ENCODE measurements at regions of chr7 and their contacts with region 1.

Region 1: GRCh38 chr7:113159746-113160339 is 41.5 kb upstream of the SMIM30 start:
- DNase-seq: peak; percentile 31 to 51
- H3K4me3 ChIP-seq: no peak overlapping the region
- H3K27ac ChIP-seq: no peak overlapping the region
- H3K4me1 ChIP-seq: no peaks in the 10 kb centered on the region
- H3K27me3 ChIP-seq: no peaks in the 10 kb centered on the region
- CTCF ChIP-seq: peak; percentile 34 to 68 (median 65)
- EP300 ChIP-seq: no peak
- POLR2A ChIP-seq: no peak
- RAD21 ChIP-seq: peak; percentile 75 to 83

Region 2: DNA sequence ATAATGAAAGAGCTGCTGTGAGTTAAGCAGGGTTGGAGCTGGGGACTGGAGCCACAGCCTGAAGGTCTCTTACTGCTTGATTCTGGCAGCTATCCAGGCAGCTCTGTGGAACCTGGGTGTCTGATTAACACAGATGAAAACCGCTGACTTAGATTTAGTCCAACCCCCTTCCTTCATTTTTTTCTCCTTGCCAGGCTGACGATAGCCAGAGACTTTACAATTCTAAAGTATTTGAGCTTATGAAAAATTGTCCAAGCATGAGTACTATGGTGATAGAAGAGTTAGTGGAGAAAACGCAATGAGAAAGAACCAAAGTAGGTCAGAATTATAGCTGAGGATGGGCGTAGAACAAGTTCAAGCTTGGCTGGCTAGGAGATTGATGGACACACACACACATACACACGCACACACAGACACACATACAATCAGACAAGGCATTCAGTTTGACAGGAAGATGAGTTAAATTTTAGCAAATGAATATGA is 59.7 kb before region 1 on chr7:
- CTCF ChIA-PET with region 1: no interaction called
- POLR2A ChIA-PET with region 1: no interaction called
- DNase-seq: no peak
- H3K4me3 ChIP-seq: no peak overlapping the region
- H3K27ac ChIP-seq: no peak overlapping the region
- H3K4me1 ChIP-seq: no peaks in the 10 kb centered on the region
- H3K27me3 ChIP-seq: no peaks in the 10 kb centered on the region; a peak in 2 of 7 replicates
- CTCF ChIP-seq: no peak
- EP300 ChIP-seq: no peak
- POLR2A ChIP-seq: no peak
- RAD21 ChIP-seq: no peak

Region 3: GRCh38 chr7:113128028-113128427 is 31.8 kb before region 1 on chr7:
- CTCF ChIA-PET with region 1: interaction called, 16 read pairs
- POLR2A ChIA-PET with region 1: no interaction called
- DNase-seq: no peak
- H3K4me3 ChIP-seq: no peak overlapping the region
- H3K27ac ChIP-seq: no peak overlapping the region
- H3K4me1 ChIP-seq: no peaks in the 10 kb centered on the region
- H3K27me3 ChIP-seq: no peaks in the 10 kb centered on the region
- CTCF ChIP-seq: no peak
- EP300 ChIP-seq: no peak
- POLR2A ChIP-seq: no peak
- RAD21 ChIP-seq: no peak

Region 4: GRCh38 chr7:113142385-113143119 is 17.3 kb before region 1 on chr7:
- CTCF ChIA-PET with region 1: interaction called, 23 read pairs
- POLR2A ChIA-PET with region 1: no interaction called
- DNase-seq: no peak
- H3K4me3 ChIP-seq: no peak overlapping the region
- H3K27ac ChIP-seq: no peak overlapping the region
- H3K4me1 ChIP-seq: no peaks in the 10 kb centered on the region
- H3K27me3 ChIP-seq: no peaks in the 10 kb centered on the region
- CTCF ChIP-seq: no peak
- EP300 ChIP-seq: no peak
- POLR2A ChIP-seq: no peak
- RAD21 ChIP-seq: no peak

Region 5: DNA sequence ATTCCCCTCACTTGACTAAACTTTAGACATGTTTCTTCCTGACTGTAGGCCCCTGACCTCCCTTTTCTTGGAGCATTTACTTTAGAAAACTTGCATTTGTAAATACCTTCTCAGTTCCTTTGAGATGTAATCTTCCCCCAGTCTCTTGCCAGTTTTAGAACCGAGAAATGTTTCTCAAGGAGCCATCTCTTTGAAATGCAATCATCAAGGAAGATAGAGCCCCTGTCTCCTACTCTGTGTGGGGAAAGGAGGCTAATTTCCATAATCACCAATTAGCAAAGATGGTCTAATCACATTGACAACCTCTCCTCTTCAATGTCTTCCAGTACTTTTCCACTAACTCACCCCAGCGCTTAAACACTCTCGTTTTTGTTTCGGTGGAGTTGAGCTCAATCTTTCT is 28.6 kb after region 1 on chr7:
- CTCF ChIA-PET with region 1: interaction called, 18 read pairs
- POLR2A ChIA-PET with region 1: no interaction called
- DNase-seq: no peak
- H3K4me3 ChIP-seq: no peak overlapping the region
- H3K27ac ChIP-seq: no peak overlapping the region
- H3K4me1 ChIP-seq: no peaks in the 10 kb centered on the region
- H3K27me3 ChIP-seq: peaks cover 0 to 3% (median 0%) of the 10 kb centered on the region in 4 experiments; a peak in 1 of 7 replicates
- CTCF ChIP-seq: no peak
- EP300 ChIP-seq: no peak
- POLR2A ChIP-seq: no peak
- RAD21 ChIP-seq: no peak

Region 6: GRCh38 chr7:113289140-113289740 is 129.4 kb after region 1 on chr7:
- CTCF ChIA-PET with region 1: interaction called, 13 read pairs
- POLR2A ChIA-PET with region 1: no interaction called
- DNase-seq: no peak
- H3K4me3 ChIP-seq: no peak overlapping the region
- H3K27ac ChIP-seq: no peak overlapping the region
- H3K4me1 ChIP-seq: no peaks in the 10 kb centered on the region
- H3K27me3 ChIP-seq: no peaks in the 10 kb centered on the region
- CTCF ChIP-seq: peak in 2 of 3 experiments; percentile 43 to 62; a peak in 2 of 4 replicates
- EP300 ChIP-seq: no peak
- POLR2A ChIP-seq: no peak
- RAD21 ChIP-seq: peak; percentile 71 to 74

Region 7: DNA sequence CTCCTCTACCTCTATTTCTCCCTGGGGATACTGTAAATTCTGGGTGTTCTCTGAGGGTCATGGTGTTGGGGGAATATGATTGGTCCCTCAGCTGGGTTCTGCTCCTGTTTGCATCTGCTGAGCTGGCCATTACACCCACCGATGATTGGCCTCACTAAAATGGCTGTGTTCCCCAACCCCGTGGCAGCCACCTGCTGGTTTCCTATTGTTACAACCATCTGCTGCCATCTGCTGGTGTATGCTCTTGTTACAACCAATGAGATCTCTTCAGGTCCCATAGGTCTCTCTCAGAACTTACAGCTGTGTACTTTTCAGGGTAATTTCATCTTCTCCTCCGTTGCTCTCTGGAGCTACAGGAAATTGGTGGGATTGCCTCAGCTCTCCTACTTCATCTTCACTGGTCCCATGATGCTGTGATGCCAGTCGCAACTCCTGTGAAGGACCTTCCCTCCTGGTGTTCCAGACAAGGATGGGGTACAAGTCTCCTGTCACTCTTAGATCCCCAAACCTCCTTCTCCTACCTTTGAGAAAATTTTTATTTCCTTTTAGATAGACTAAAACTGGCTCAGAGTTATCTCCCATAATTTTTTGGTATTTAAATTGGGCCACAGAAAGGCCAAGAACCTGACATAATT is 262.0 kb after region 1 on chr7:
- CTCF ChIA-PET with region 1: interaction called, 57 read pairs
- POLR2A ChIA-PET with region 1: no interaction called
- DNase-seq: peak; percentile 38 to 86
- H3K4me3 ChIP-seq: no peak overlapping the region
- H3K27ac ChIP-seq: no peak overlapping the region
- H3K4me1 ChIP-seq: no peaks in the 10 kb centered on the region
- H3K27me3 ChIP-seq: no peaks in the 10 kb centered on the region
- CTCF ChIP-seq: peak; percentile 49 to 93 (median 82)
- EP300 ChIP-seq: no peak
- POLR2A ChIP-seq: no peak
- RAD21 ChIP-seq: peak; percentile 90 to 94